ENCODE measurements at regions of chr18 and their contacts with region 1.

Region 1: DNA sequence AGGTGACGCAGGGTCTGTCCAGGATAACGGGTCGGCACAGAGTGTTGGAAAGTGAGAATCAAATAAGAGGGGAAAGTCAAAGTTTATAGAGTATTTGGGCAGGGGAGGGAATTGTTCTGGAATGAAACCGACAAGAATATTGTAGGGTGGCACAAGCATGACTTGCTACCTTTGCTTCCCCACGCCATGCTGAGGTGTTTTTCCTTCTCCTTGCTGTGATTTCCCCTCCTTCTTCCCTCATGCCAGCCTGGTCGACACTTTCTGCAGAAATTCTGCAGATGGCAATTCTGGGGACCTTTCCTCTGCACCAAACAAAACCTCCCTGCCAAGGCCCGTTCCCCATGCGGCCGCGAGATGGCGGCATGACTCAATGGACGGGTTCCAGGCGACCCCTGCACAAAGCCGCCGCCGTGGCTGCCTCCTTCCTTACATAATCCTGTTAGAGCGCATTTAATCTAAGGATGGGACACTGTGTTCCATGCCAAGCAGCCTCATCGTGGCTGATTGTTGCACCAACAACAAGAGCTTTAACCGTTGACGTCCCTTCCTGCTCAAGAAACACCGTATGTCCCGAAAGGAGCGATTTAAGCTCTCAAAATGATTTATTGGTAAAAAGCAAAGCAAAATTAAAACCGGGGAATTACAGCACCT is at the start of gene MRO:
- DNase-seq: peak; percentile 53 to 70
- H3K4me3 ChIP-seq: peak within 1 kb of the TSS; percentile 30 to 54 (median 38)
- H3K27ac ChIP-seq: peak within 1 kb of the TSS in 1 of 2 donors; percentile 13
- H3K4me1 ChIP-seq: peaks cover 0 to 13% of the 10 kb centered on the region in 2 donors
- H3K27me3 ChIP-seq: no peaks in the 10 kb centered on the region
- CTCF ChIP-seq: peak; percentile 26 to 83 (median 72)
- POLR2A ChIP-seq: no peak
- total RNA-seq, gene MRO: 0.59 to 3.0 (median 0.66) TPM

Region 2: GRCh38 chr18:52312321-52312720 is 1492.5 kb after region 1 on chr18:
- intact Hi-C with region 1: loop called (anchors 10 kb)
- DNase-seq: no peak
- H3K4me3 ChIP-seq: no peak overlapping the region
- H3K27ac ChIP-seq: no peak overlapping the region
- H3K4me1 ChIP-seq: no peaks in the 10 kb centered on the region
- H3K27me3 ChIP-seq: no peaks in the 10 kb centered on the region
- CTCF ChIP-seq: no peak
- POLR2A ChIP-seq: no peak

Measured in breast epithelium (tissue), 4 donors.